Dendritic cell treated with granulocyte-macrophage colony-stimulating factor and Interleukin-4, amounts not matched to agents 40 ng/mL and 50 ng/mL, for 4 days (primary cell): ENCODE measurements at regions of chr4 and their contacts with region 1.

Region 1: DNA sequence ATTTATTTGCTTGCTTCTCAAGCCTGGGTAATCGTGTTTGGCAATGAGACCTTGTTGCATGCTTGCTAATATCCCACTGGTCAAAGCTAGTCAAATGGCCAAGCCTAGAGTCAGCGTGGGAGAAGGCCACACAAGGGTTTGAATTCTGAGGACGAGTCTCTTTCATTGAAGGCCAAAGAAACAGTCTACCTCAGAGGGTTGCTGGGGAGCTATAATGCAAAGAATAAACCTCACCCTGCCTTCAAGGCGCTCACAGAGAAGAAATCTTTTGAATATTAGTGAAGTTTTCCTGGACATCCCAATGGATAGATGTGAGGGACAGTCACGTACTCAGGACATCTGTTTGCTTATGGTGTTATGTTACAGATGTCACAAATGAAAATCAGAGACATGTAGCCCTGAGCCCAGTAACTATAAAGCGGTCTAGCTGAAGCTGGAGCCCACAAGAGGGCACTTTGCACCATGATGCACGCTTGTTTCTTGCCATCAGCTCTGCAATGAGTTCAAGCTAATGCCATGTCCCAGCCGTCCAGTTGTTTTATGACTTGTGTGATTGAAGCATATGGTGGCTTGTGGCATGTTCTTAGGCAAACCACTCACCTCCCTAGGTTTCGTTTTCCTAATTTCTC is 1.1 kb upstream of the TLR3 start:
- H3K4me3 Mint-ChIP-seq: no peak overlapping the region
- H3K27ac Mint-ChIP-seq: no peak overlapping the region
- H3K4me1 Mint-ChIP-seq: peaks cover 10% of the 10 kb centered on the region
- H3K27me3 Mint-ChIP-seq: peaks cover 10% of the 10 kb centered on the region

Region 2: DNA sequence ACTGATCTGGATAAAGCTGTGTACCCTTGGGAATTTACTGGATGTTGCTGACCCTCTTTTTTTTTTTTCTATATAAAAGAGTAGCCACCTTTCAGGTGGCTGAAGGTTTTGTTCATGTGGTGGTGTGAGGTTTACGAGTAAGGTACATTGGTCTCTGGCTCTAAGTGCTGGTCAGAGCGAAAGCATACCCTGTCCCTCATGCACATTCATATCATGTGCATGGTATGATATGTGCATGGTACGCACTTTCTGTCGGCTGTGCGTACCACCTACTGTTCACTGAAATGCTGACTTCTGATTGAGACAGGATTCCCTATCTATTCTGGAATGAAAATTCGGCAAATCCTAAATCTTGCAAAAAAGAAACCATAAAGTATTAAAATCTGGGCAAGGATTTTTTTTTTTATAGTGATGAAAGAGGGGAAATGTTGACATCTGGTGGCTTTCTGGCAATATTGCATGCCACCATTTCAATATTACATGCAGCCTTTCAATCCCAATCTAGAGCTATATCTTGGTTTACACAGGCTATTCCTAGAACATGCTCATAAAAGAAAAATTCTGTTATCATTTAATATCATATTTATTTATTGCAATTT is 69.4 kb after region 1 on chr4:
- intact Hi-C with region 1: loop called (anchors 2 kb)
- H3K4me3 Mint-ChIP-seq: no peak overlapping the region
- H3K27ac Mint-ChIP-seq: no peak overlapping the region
- H3K4me1 Mint-ChIP-seq: peaks cover 15% of the 10 kb centered on the region
- H3K27me3 Mint-ChIP-seq: peaks cover 23% of the 10 kb centered on the region

Region 3: GRCh38 chr4:186191200-186192065 is 123.6 kb after region 1 on chr4 and contains the start of gene CYP4V2:
- intact Hi-C with region 1: loop called (anchors 5 kb)
- H3K4me3 Mint-ChIP-seq: peak within 1 kb of the TSS; percentile 97
- H3K27ac Mint-ChIP-seq: peak within 1 kb of the TSS; percentile 96
- H3K4me1 Mint-ChIP-seq: peaks cover 18% of the 10 kb centered on the region
- H3K27me3 Mint-ChIP-seq: no peaks in the 10 kb centered on the region

Region 4: GRCh38 chr4:186587416-186588018 is 519.6 kb after region 1 on chr4:
- intact Hi-C with region 1: loop called (anchors 5 kb)
- H3K4me3 Mint-ChIP-seq: no peak overlapping the region
- H3K27ac Mint-ChIP-seq: no peak overlapping the region
- H3K4me1 Mint-ChIP-seq: no peaks in the 10 kb centered on the region
- H3K27me3 Mint-ChIP-seq: no peaks in the 10 kb centered on the region